ENCODE measurements at regions of chr1 and their contacts with region 1.

Region 1: GRCh38 chr1:119613769-119614720 is 34.0 kb downstream of the ZNF697 start:
- DNase-seq: peak; percentile 88

Region 2: GRCh38 chr1:119420644-119421043 is 193.4 kb before region 1 on chr1:
- intact Hi-C with region 1: no loop called
- DNase-seq: no peak

Region 3: DNA sequence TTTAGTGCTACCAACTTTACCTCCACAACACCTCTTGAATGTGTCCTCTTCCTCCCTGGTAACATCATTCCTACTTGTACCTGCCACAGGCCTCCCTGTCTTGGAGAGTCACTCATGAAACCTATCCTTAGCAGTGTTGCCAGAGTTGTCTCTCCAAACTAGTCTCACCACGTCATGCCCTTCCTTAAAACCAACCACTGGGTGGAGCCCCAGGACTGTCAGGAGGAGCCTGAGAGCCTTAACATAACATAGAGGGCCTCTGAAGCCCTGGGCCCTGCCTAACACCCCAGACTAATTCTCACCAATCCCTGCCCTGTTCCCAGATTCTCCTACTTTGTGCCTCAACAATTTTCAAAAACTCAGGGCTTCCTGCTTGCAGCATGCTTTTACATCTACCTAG is 31.2 kb before region 1 on chr1:
- intact Hi-C with region 1: loop called (anchors 2 kb)
- DNase-seq: no peak

Region 4: DNA sequence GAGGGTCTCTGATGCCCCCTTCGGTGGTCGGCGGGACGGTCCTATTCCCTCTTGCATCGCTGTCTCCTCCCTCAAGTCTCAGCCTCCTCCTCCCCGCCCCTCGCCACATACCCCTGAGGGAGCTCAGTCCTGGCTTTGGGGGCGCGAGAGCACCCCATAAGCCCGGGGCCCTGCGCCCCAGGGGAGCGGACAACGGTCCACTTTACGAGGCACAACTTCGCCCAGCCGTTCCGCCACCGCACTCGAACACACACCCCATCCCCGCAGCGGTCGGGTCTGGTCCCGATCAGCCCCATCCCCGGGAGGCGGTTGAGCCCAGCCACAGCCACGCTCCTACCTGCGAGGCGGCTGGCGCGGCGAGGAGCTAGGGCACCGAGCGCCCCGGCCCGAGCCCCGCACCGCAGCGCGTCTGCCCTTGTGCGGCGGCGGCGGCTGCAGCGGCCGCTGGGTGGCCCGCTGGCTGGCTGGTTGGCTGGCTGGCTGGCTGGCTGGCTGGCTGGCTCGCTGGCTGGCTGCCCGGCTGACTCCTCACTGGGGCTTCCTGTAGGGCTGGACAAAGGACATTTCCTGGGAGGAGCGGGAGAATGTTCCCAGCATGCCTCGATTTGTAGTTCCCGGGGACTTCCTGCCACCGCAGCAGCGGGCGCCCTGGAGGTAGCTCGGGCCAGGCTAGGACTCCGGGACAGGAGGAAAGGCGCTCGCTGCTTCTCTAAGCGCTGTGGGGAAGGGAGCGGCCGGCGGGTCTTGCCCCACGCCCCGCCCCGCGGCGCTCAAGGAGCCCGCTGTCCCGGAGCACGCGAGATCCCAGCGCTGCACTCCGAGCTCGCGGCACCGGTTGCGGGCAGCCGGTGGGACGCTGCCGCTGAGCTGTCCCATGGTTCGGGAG is 33.9 kb after region 1 on chr1 and contains the start of gene ZNF697:
- intact Hi-C with region 1: loop called (anchors 5 kb)
- DNase-seq: peak; percentile 98
- total RNA-seq, gene ZNF697: 15.1 TPM

Region 5: DNA sequence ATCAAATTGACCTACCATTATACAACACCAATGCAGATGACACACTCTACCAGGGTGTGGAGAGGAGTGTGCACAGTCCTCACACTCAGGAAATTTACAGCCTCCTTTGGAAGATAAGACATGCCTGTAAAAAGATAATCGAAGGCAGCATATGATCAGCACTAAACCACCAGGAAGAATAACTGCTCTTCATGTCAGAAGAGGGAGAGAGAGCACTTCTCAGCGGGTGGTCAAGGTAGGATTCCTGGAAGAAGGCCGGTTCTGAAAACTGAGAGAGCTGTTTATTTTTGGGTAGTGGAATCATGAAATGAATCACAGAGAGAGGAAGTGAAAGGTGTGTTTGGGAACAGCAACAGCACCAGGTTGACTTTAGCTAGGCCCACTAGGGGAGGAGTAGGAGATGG is 48.0 kb after region 1 on chr1:
- intact Hi-C with region 1: loop called (anchors 1 kb)
- DNase-seq: no peak

Region 6: GRCh38 chr1:119675349-119676345 is 61.6 kb after region 1 on chr1:
- intact Hi-C with region 1: loop called (anchors 1 kb)
- DNase-seq: no peak

Region 7: DNA sequence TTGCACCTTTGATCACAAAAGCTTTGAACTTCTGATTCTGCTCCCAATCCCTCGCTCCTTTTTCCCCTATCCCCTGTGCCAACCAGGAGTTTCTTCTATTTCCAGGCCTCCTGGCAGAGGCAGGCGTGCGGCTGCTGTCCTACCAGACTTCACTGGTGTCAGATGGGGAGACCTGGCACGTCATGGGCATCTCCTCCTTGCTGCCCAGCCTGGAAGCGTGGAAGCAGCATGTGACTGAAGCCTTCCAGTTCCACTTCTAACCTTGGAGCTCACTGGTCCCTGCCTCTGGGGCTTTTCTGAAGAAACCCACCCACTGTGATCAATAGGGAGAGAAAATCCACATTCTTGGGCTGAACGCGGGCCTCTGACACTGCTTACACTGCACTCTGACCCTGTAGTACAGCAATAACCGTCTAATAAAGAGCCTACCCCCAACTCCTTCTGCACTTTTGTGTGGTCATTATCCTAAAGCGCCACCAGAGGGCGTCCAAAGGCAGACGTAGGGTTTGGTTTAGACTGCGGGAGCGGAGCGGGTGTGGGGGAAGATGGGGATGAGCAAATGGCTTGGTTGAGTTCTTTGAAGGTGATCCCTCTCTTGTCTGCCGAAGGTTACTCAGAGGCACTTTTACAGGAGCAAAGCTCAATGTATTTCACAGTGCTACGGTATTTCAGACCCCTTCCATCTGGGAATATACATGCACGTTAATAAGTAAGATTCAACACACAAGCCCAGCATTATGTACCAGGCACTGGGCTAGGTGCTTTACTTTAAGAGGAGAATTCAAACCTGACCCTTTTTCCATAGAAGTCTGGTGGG is 129.9 kb after region 1 on chr1:
- intact Hi-C with region 1: loop called (anchors 5 kb)
- DNase-seq: peak; percentile 82

Measured in cardiac septum (tissue), 1 donor.